Thyroid gland (tissue), 4 donors: ENCODE measurements at regions of chr4 and their contacts with region 1.

Region 1: DNA sequence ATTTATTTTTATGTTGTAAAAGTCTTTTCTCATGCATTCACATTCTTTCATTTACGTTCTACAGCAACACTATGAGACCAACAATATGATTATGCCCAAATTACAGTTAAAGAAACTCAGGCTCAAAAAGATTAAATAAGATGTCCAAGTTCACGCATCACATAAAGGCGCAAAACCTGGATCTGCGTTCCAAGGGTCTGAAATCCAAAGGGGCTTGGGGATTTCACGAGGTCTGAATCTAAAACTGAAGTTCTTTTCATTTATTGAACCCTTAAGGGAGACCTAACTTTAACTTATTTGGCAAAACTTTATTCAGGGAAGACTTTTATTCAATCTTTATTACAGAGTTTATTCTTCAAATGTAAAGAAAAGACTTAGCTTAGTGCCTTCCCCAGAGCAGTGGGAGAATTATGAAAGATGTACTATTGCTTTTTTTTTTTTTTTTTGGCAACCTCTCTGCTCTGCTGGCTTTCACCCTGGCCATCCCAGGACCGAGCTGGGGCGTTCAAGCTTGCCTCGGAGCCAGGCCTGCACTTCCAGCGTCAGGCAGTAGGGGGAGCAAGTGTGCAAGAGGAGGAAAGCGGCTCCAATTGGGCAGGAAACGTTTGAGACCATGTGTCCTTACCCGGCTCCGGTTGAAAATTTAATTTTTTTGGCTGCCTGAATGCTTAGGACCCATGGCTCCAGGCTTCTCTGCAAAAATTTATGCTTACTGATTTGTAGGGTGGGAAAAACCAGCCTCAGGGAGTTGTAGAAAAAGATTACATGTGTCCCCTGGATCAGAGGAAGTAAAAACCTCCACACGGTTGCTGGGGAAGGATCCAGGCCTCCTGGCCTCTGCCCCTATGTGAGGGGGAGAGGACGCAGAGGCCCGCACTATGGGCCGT is 344.3 kb upstream of the KLF3 start:
- DNase-seq: peak; percentile 89 to 95
- H3K4me3 ChIP-seq: no peak overlapping the region
- H3K27ac ChIP-seq: peak overlapping the region; percentile 57 to 90 (median 70)
- H3K4me1 ChIP-seq: peaks cover 19 to 30% of the 10 kb centered on the region in 2 donors
- H3K27me3 ChIP-seq: no peaks in the 10 kb centered on the region
- CTCF ChIP-seq: peak; percentile 87 to 99 (median 96)
- POLR2A ChIP-seq: no peak

Region 2: DNA sequence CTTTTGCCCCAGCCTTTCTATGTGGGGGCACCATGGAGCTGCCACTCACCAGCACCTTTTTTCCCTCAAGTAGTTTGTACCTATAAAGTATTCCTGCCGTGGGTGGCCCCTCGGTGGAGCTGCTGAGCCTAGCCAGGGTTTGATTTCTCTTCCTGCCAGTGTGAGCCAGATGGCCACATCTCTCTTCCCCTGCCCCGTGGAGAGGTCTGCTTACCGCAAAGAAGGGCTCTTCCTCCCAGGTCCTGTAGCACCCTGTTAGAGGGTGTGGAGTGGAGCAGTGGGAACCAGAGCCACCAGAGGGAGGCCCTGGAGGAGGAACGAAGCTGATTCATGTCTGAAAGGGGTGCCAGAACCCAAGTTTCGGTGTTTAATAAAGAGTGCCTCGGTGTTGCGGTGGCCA is 264.1 kb before region 1 on chr4:
- intact Hi-C with region 1: loop called (anchors 10 kb)
- DNase-seq: no peak
- H3K4me3 ChIP-seq: no peak overlapping the region
- H3K27ac ChIP-seq: peak overlapping the region; percentile 40 to 79 (median 50)
- H3K4me1 ChIP-seq: peaks cover 58 to 71% of the 10 kb centered on the region in 2 donors
- H3K27me3 ChIP-seq: no peaks in the 10 kb centered on the region
- CTCF ChIP-seq: no peak
- POLR2A ChIP-seq: no peak

Region 3: GRCh38 chr4:38237139-38237538 is 82.6 kb before region 1 on chr4:
- intact Hi-C with region 1: no loop called
- DNase-seq: no peak
- H3K4me3 ChIP-seq: no peak overlapping the region
- H3K27ac ChIP-seq: peak overlapping the region in 1 of 3 donors; percentile 17
- H3K4me1 ChIP-seq: peaks cover 5 to 26% of the 10 kb centered on the region in 2 donors
- H3K27me3 ChIP-seq: no peaks in the 10 kb centered on the region
- CTCF ChIP-seq: no peak
- POLR2A ChIP-seq: no peak

Region 4: DNA sequence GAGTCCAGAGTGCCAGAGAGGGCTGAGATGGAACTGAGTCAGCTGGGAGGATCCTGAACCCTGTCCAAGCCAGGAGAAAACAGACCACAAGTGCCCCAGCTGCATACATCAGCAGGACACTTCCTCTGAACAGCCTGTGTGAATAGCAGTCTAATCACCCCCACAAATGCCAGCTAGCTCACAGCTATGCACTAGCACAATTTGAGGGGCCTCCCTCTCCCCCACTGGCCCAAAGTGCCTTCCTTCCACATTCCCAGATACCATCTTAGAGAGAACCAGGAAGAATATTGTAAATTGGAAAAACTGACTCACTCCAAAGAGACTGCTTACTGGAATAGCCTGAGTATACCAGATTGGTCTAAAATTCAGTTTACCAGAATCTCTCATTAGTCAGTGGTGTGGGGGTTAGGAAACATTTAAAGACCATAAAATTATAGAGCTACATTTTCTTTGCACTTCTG is 51.7 kb after region 1 on chr4:
- intact Hi-C with region 1: no loop called
- DNase-seq: no peak
- H3K4me3 ChIP-seq: no peak overlapping the region
- H3K27ac ChIP-seq: no peak overlapping the region
- H3K4me1 ChIP-seq: peaks cover 0 to 5% of the 10 kb centered on the region in 2 donors
- H3K27me3 ChIP-seq: no peaks in the 10 kb centered on the region
- CTCF ChIP-seq: no peak
- POLR2A ChIP-seq: no peak

Region 5: GRCh38 chr4:38387348-38387747 is 67.6 kb after region 1 on chr4:
- intact Hi-C with region 1: loop called (anchors 10 kb)
- DNase-seq: peak; percentile 98
- H3K4me3 ChIP-seq: no peak overlapping the region
- H3K27ac ChIP-seq: peak overlapping the region; percentile 75 to 91 (median 86)
- H3K4me1 ChIP-seq: peaks cover 30 to 42% of the 10 kb centered on the region in 2 donors
- H3K27me3 ChIP-seq: no peaks in the 10 kb centered on the region
- CTCF ChIP-seq: peak in 1 of 6 experiments; percentile 2
- POLR2A ChIP-seq: peak in 1 of 2 donors; percentile 33

Region 6: DNA sequence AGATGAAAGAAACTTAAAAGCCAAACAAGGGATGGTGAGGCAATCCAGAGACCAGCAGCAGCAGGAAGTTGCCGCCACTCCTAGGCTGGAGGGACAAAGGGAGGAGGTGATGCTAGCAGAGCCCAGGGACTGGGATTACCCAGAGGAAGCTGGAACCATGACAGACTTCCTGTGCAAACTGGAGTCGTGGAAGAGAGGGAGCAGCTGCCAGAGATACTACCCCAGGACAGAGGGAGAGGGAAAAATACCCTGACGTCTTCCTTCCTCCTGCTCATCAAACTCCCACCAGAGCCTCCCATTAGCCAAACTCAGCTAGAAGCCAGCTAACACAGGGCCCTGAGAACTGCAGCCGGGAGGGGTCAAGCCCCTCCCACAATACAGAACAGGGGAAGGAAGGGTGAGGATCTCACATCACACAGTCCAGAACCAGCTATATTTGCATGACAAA is 243.1 kb after region 1 on chr4:
- intact Hi-C with region 1: loop called (anchors 10 kb)
- DNase-seq: peak; percentile 19 to 26
- H3K4me3 ChIP-seq: no peak overlapping the region
- H3K27ac ChIP-seq: no peak overlapping the region
- H3K4me1 ChIP-seq: peaks cover 12 to 30% of the 10 kb centered on the region in 2 donors
- H3K27me3 ChIP-seq: no peaks in the 10 kb centered on the region
- CTCF ChIP-seq: no peak
- POLR2A ChIP-seq: no peak

Region 7: GRCh38 chr4:38730830-38731646 is 411.3 kb after region 1 on chr4:
- intact Hi-C with region 1: loop called (anchors 10 kb)
- DNase-seq: peak; percentile 73 to 82
- H3K4me3 ChIP-seq: no peak overlapping the region
- H3K27ac ChIP-seq: no peak overlapping the region
- H3K4me1 ChIP-seq: peaks cover 9 to 27% of the 10 kb centered on the region in 2 donors
- H3K27me3 ChIP-seq: no peaks in the 10 kb centered on the region
- CTCF ChIP-seq: peak; percentile 72 to 90 (median 82)
- POLR2A ChIP-seq: no peak

Region 8: GRCh38 chr4:39587881-39588280 is 1268.2 kb after region 1 on chr4:
- intact Hi-C with region 1: no loop called
- DNase-seq: no peak
- H3K4me3 ChIP-seq: no peak overlapping the region
- H3K27ac ChIP-seq: no peak overlapping the region
- H3K4me1 ChIP-seq: no peaks in the 10 kb centered on the region
- H3K27me3 ChIP-seq: no peaks in the 10 kb centered on the region
- CTCF ChIP-seq: no peak
- POLR2A ChIP-seq: no peak